Heart right ventricle (tissue), 16 donors: ENCODE measurements at regions of chr3 and their contacts with region 1.

Region 1: DNA sequence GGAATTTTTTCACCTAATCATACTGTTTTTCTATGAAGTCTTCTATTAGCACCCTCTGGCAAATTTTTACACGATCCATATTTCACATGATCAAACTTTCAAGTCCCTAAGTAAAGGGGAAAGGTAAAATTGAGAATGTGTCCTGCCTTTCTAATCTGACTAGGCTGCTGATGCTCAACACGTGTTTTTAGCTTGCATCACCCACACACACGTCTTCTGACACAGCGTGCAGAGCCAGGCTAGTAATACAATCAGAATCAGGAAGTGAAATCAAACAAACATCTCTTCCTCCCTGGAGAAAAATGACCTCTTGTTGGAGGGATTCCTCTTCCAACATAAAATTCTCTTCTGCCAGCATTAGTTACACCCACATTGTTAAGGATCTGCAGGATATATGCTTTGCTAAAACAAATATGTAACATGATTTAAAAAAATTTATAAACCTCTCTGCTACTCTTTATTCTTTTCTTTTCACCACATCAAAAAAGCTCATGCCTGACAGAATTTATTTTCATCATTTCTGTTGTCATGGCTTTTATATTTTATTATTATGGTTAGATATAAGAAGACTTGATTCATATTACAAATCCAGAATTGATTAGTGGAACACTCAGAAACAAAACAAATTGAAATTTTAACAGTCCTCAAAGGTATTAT is 122.4 kb downstream of the RAP2B start:
- DNase-seq: peak in 1 of 2 donors; percentile 56
- ATAC-seq: peak in 7 of 8 donors; percentile 80 to 92 (median 87)
- H3K4me3 ChIP-seq: no peak overlapping the region
- H3K27ac ChIP-seq: peak overlapping the region in 7 of 10 donors; percentile 6 to 83 (median 36)
- H3K4me1 ChIP-seq: peaks cover 0 to 36% (median 23%) of the 10 kb centered on the region in 9 donors
- H3K27me3 ChIP-seq: no peaks in the 10 kb centered on the region
- CTCF ChIP-seq: no peak

Region 2: DNA sequence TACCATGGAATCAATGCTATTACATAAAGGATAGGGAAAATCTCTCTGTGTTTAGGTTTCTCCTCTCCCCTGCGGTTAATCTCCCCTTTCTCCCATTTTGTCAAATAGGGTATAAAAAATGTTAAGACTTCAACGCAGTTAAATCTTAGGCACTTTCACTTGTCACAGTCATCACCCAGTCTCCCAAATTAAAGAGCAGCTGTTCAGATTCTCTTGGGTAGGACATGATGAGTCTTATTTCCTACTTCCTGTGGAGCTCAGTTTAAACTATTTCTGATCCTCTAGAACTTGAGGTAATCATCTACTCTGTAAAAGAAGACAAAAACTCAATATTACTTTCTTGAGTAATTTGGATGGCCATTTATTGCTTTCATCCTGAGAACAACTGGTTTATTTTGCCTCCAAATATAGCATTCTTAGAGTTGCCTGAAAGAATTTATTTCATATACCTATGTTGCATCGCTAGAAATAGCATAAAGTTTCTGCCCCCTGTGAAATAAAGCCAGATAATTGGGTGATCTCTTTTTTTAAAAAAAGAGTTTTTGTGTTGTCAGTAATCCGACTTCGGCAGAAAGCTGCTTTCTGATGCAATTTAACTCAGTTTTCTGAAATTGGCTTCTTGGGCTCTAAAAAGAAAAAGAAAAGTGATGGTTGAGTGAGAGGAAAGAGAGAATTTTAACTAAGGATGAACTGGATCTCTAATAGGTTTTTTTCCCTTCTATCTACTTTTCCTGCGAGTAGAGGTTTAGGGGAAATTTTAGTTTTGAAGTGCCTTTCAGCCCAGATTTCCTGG is 101.7 kb before region 1 on chr3:
- intact Hi-C with region 1: no loop called
- DNase-seq: no peak
- ATAC-seq: no peak
- H3K4me3 ChIP-seq: no peak overlapping the region
- H3K27ac ChIP-seq: no peak overlapping the region
- H3K4me1 ChIP-seq: peaks cover 0 to 4% (median 0%) of the 10 kb centered on the region in 9 donors
- H3K27me3 ChIP-seq: no peaks in the 10 kb centered on the region
- CTCF ChIP-seq: no peak

Region 3: DNA sequence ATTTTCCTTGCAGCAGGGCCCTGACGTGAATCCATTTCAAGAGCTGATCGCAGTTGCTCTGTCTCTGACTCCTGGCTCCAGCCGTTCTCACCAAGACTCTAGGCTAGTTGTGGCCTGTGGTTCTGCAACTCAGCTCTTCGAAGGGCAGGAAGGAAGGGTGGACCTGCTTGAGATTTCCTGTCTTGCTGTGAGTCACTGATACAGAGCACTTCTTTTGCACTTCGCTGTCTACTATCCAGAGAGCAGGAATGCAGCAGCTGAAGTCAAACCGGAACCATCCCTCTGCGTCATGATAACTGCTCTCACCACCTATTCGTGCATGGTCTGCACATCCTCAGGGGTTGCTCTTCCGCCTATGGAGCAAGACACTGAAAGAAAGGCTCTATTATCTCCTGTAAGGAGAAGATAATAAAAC is 62.7 kb before region 1 on chr3:
- intact Hi-C with region 1: loop called in 1 of 10 experiments (anchors 10 kb)
- DNase-seq: peak; percentile 27 to 79
- ATAC-seq: peak; percentile 90 to 100 (median 98)
- H3K4me3 ChIP-seq: peak overlapping the region in 3 of 10 donors; percentile 3 to 17 (median 17)
- H3K27ac ChIP-seq: peak overlapping the region; percentile 35 to 87 (median 66)
- H3K4me1 ChIP-seq: peaks cover 0 to 47% (median 17%) of the 10 kb centered on the region in 9 donors
- H3K27me3 ChIP-seq: no peaks in the 10 kb centered on the region
- CTCF ChIP-seq: no peak

Region 4: DNA sequence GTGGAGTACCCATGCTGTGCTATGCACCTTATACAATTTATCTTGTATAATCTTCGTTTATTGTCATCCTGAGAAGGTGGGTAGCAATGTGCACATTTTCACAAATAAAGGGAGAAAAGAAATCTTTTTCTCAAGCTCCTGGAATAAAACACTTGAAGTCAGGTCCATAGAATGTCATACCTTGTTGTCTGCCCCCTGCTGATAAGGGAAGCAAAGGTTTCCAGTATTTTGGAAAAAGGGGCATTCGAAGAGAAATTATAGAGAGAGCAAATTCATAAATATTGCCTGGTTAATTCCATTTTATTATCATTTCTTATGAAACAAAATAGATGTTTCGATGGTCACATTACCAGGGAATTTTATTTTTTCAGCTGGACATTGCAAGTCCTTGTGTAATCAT is 155.4 kb after region 1 on chr3:
- intact Hi-C with region 1: loop called in 1 of 10 experiments (anchors 10 kb)
- DNase-seq: no peak
- ATAC-seq: no peak
- H3K4me3 ChIP-seq: no peak overlapping the region
- H3K27ac ChIP-seq: no peak overlapping the region
- H3K4me1 ChIP-seq: peaks cover 0 to 6% (median 0%) of the 10 kb centered on the region in 9 donors
- H3K27me3 ChIP-seq: no peaks in the 10 kb centered on the region
- CTCF ChIP-seq: no peak

Region 5: DNA sequence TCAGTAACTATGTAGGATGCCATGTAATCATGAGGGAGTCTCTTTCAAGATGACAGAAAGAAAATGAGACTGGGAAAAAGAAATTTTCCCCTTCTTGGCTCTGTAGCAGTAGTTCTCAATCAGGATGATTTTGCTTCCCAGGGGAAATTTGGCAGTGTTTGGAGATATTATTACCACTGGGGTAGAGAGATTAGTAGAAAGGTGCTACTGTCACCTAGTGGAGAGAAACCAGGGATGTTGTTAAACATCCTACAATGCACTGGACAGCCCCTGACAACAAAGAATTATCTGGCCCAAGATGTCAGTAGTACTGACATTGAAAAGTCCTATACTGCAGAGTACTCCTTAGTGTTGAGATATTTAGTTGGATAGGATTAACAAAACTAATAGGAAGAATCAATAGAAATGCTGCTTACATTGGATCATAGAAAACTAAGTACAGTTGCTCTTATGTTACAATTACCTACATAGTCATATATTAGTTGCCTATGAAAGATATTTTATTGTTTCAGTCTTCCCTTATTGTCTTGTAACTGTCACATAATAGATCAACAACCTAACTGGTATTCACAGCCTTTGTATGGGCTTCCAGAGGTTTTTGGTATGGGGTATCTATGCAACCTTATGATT is 310.9 kb after region 1 on chr3:
- intact Hi-C with region 1: loop called in 1 of 10 experiments (anchors 5 kb)
- DNase-seq: no peak
- ATAC-seq: peak in 4 of 8 donors; percentile 52 to 60 (median 58)
- H3K4me3 ChIP-seq: no peak overlapping the region
- H3K27ac ChIP-seq: no peak overlapping the region
- H3K4me1 ChIP-seq: peaks cover 0 to 12% (median 7%) of the 10 kb centered on the region in 9 donors
- H3K27me3 ChIP-seq: no peaks in the 10 kb centered on the region
- CTCF ChIP-seq: peak; percentile 16 to 71 (median 60)